Right ventricle myocardium inferior (tissue), 1 donor: ENCODE measurements at regions of chr4 and their contacts with region 1.

Region 1: GRCh38 chr4:128809477-128810330 is at the start of gene JADE1:
- DNase-seq: peak; percentile 92
- ATAC-seq: peak; percentile 76
- total RNA-seq, gene JADE1: 24.3 TPM

Region 2: DNA sequence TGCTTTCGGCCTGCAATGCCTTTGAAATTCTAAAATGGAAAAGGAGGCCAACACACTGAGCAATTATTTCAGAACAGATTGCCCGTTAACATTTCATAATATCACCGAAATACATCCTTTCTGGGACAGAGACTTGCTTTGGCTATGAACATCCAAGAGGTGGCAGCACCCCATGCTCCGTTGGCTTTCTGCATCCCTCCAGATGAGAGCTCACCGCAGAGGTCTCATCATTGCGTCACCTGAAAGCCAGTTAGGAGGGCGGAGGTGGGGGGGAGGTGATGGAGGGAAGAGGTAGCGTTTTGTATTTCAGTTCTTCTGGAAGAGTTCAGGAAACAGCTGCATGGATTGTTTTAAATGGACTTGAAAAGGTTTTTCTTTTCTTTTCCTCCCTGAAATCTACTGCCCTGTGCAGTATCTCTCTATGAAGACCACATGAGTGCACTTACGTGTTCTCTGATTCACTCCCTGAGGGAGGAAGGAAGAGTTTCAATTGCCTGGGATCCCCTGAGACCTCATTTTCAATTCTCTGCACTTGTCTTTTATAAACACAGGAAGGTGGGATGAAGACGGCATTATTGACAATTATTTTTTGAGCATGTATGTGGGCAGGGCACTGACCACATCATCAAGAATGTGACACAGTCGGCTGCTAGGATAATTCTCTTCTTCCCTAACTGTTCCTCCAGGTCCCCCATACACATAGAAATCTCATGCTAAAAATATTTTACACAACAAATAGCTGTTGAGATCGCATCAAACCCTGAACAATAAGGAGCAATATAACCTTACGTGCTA is 355.2 kb before region 1 on chr4:
- intact Hi-C with region 1: loop called (anchors 5 kb)
- DNase-seq: peak; percentile 78
- ATAC-seq: peak; percentile 93

Region 3: GRCh38 chr4:128660361-128661215 is 149.1 kb before region 1 on chr4:
- intact Hi-C with region 1: loop called (anchors 2 kb)
- DNase-seq: no peak
- ATAC-seq: peak; percentile 95

Region 4: DNA sequence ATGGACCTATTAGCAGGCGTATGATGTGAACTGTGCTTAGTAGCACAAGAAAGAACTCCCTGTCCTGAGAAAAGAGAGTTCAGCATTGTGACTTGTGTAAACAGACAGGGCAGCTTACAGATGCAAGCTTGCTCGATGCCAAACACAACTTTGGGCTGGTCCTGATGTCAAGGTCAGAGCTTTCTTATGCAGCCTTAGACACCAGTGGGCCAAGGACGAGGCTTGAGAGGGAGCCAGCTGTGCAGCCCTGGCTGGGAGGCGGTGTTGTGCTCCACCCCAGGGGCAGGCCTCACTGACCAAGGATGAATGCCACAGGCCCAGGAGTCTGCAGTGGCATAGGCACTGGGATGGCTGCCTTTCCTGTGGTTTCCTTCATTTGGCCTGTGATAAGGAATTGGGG is 35.2 kb after region 1 on chr4:
- intact Hi-C with region 1: loop called (anchors 2 kb)
- DNase-seq: no peak
- ATAC-seq: peak; percentile 81

Region 5: GRCh38 chr4:129093191-129093920 is 283.7 kb after region 1 on chr4 and contains the start of gene SCLT1:
- intact Hi-C with region 1: loop called (anchors 10 kb)
- DNase-seq: peak; percentile 99
- ATAC-seq: peak; percentile 99
- total RNA-seq, gene SCLT1: 7.2 TPM